ENCODE measurements at regions of chr11 and their contacts with region 1.

Region 1: DNA sequence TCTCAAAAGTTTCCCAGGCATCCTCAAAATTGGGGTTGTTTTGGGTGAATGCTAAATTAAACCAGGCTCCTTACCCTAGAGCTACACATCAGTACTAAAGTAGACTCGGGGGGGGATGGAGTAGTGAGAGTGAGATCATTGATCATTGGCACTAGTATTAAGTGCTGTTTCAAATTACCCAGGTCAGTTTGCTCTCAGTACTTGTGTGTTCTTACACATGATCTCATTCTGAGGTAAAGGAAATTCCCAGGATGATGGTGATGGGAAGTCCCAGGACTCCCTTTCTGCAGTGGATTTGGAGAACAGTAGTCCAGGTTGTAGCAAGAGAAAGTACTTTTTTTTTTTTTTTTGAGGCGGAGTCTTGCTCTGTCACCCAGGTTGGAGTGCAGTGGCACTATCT is 12.5 kb downstream of the RBM4 start:
- DNase-seq: no peak
- H3K4me3 Mint-ChIP-seq: no peak overlapping the region
- H3K27ac Mint-ChIP-seq: no peak overlapping the region
- H3K4me1 Mint-ChIP-seq: peaks cover 27% of the 10 kb centered on the region
- H3K27me3 Mint-ChIP-seq: no peaks in the 10 kb centered on the region

Region 2: DNA sequence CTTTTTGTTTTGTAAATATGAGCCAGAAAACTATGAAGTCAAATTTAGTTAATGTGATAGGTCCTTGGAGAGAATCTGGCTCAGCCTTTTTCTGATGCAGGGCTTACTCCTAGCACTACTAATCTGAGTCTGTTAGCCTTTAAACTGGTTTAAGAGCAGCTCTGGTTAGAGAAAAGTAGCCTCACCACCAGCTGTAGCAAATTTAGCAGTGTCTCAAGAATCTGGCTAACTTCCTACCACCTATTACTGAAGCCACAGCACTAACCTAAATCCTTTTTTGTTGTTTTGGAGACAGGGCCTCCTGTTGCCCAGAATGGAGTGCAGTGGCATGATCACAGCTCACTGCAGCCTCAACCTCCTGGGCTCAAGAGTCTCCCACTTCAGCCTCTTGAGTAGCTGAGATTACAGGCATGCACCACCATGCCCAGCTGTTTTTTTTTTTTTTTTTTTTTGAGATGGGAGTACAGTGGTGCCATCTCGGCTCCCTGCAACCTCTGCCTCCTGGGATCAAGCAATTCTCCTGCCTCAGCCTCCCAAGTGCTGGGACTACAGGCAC is 12.8 kb after region 1 on chr11:
- CTCF ChIA-PET with region 1: interaction called, 5 read pairs
- POLR2A ChIA-PET with region 1: interaction called, 12 read pairs
- DNase-seq: no peak
- H3K4me3 Mint-ChIP-seq: no peak overlapping the region
- H3K27ac Mint-ChIP-seq: no peak overlapping the region
- H3K4me1 Mint-ChIP-seq: peaks cover 4% of the 10 kb centered on the region
- H3K27me3 Mint-ChIP-seq: no peaks in the 10 kb centered on the region